CD8-positive, alpha-beta memory T cell (primary cell): ENCODE measurements at regions of chr3 and their contacts with region 1.

Region 1: DNA sequence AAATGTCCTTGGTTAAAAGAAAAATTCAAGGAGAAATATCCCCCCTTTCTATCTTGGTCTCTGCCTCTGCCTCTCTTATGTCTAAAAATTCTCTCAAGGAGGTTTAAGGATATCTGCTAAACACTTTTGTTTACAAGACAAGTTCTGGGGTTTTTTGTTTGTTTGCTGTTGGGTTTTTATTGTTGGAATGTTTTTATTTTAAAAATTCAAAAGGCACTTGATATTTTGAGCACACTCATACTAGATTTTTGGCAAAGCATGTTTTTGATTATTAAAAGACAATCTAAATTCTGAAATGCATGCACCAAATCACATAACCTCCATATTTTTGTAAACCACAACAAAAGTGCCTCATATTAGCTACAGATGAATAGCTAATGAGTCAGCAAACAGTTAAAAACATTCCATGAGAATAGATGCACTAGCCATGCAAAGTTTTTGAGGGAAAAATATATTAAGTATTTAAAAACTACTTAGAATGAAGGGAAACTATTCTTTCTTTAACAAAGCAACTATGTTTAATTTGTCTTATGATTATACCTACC is 84.6 kb downstream of the ZBTB20 start:
- DNase-seq: no peak
- H3K4me3 ChIP-seq: no peak overlapping the region
- H3K4me3 Mint-ChIP-seq: no peak overlapping the region
- H3K27ac ChIP-seq: no peak overlapping the region
- H3K27ac Mint-ChIP-seq: no peak overlapping the region
- H3K4me1 ChIP-seq: no peaks in the 10 kb centered on the region
- H3K4me1 Mint-ChIP-seq: peaks cover 3 to 15% (median 8%) of the 10 kb centered on the region in 3 donors
- H3K27me3 ChIP-seq: no peaks in the 10 kb centered on the region
- H3K27me3 Mint-ChIP-seq: no peaks in the 10 kb centered on the region

Region 2: GRCh38 chr3:113985541-113985940 is 1076.9 kb before region 1 on chr3:
- CTCF ChIA-PET with region 1: no interaction called
- POLR2A ChIA-PET with region 1: interaction called, 14 read pairs
- DNase-seq: peak in 1 of 5 donors; percentile 8
- H3K4me3 ChIP-seq: no peak overlapping the region
- H3K4me3 Mint-ChIP-seq: peak overlapping the region in 1 of 7 donors; percentile 1
- H3K27ac ChIP-seq: no peak overlapping the region
- H3K27ac Mint-ChIP-seq: peak overlapping the region in 6 of 8 donors; percentile 35 to 91 (median 74)
- H3K4me1 ChIP-seq: no peaks in the 10 kb centered on the region
- H3K4me1 Mint-ChIP-seq: peaks cover 3 to 17% (median 8%) of the 10 kb centered on the region in 3 donors
- H3K27me3 ChIP-seq: no peaks in the 10 kb centered on the region
- H3K27me3 Mint-ChIP-seq: no peaks in the 10 kb centered on the region